IMR-90 (cell line): ENCODE measurements at regions of chr9 and their contacts with region 1.

Region 1: GRCh38 chr9:36154331-36154952 is 14.7 kb upstream of the CCIN start:
- DNase-seq: peak; percentile 71
- ATAC-seq: peak; percentile 64
- H3K4me3 ChIP-seq: no peak overlapping the region
- H3K27ac ChIP-seq: peak overlapping the region; percentile 54
- H3K4me1 ChIP-seq: peaks cover 17% of the 10 kb centered on the region
- H3K27me3 ChIP-seq: no peaks in the 10 kb centered on the region
- CTCF ChIP-seq: no peak
- POLR2A ChIP-seq: no peak
- RAD21 ChIP-seq: no peak

Region 2: DNA sequence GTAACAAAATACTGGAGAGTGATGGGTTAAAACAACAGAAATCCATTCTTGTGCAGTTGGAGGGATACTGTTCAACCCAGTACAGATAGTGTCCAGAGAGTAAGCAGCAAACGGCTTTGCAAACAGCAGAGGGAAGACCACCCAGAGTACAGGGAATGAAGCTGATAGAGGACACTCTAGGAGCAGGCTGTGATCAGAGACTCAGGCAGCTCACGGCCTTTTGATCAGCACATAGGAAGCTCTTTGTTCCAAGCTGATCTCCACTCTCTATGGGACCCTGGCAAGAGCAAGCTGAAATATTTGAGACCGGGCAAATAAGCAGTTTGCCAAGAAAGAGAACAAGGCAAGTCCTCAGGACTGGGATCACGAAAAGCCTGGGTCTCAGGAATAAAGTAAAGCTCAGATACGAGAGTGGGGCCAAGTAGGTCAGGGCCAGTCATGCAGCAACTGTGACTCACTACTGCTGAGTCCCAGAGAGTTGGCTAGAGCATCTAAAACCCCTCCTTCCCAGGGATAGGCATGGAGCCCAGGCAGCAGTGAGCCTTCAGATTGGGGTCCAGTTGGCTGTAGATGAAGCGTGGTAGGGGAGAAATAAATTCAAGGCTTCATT is 470.7 kb after region 1 on chr9:
- CTCF ChIA-PET with region 1: no interaction called
- POLR2A ChIA-PET with region 1: interaction called, 10 read pairs
- dilution Hi-C with region 1: no loop called
- in situ Hi-C with region 1: no loop called
- intact Hi-C with region 1: no loop called
- DNase-seq: peak; percentile 90
- ATAC-seq: peak; percentile 96
- H3K4me3 ChIP-seq: no peak overlapping the region
- H3K27ac ChIP-seq: peak overlapping the region; percentile 63; the same call in 1 of the 2 replicates
- H3K4me1 ChIP-seq: peaks cover 8% of the 10 kb centered on the region
- H3K27me3 ChIP-seq: no peaks in the 10 kb centered on the region
- CTCF ChIP-seq: no peak
- POLR2A ChIP-seq: no peak
- RAD21 ChIP-seq: no peak